Activated CD8-positive, alpha-beta T cell treated with anti-CD3 and anti-CD28 coated beads, Interleukin-2, amount 10 ng/mL, durations not matched to agents 7 days and 5 days (primary cell): ENCODE measurements at regions of chr19 and their contacts with region 1.

Region 1: GRCh38 chr19:46840136-46840942 is 10.3 kb downstream of the AP2S1 start:
- DNase-seq: peak; percentile 64
- ATAC-seq: peak; percentile 73
- H3K4me3 Mint-ChIP-seq: no peak overlapping the region
- H3K27ac Mint-ChIP-seq: no peak overlapping the region
- H3K4me1 Mint-ChIP-seq: no peaks in the 10 kb centered on the region
- H3K27me3 Mint-ChIP-seq: no peaks in the 10 kb centered on the region

Region 2: DNA sequence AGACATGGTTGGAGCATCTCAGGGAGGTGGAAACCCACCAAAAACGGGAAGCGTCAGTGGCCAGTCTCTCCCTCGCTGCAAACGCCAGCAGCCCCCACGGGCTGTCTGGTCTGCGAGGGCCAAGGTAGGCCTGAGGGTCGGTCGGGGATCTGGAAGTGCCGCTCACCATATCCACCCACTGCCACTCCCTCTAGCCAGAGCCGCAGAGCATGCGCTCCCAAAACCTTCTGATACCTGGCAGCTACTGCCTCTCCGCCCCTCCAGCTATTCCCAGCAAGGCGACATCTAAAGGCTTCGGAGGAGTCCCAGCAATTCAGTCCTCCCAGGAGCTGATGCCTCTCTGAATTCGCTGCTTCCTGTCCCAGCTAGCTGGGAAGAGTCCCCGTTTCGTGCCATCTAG is 98.9 kb before region 1 on chr19:
- CTCF ChIA-PET with region 1: interaction called, 12 read pairs
- POLR2A ChIA-PET with region 1: no interaction called
- DNase-seq: no peak
- ATAC-seq: no peak
- H3K4me3 Mint-ChIP-seq: no peak overlapping the region
- H3K27ac Mint-ChIP-seq: no peak overlapping the region
- H3K4me1 Mint-ChIP-seq: peaks cover 37% of the 10 kb centered on the region
- H3K27me3 Mint-ChIP-seq: no peaks in the 10 kb centered on the region

Region 3: GRCh38 chr19:46753420-46754155 is 86.8 kb before region 1 on chr19:
- CTCF ChIA-PET with region 1: interaction called, 122 read pairs
- POLR2A ChIA-PET with region 1: interaction called, 8 read pairs
- DNase-seq: peak; percentile 85
- ATAC-seq: peak; percentile 84
- H3K4me3 Mint-ChIP-seq: no peak overlapping the region
- H3K27ac Mint-ChIP-seq: no peak overlapping the region
- H3K4me1 Mint-ChIP-seq: peaks cover 25% of the 10 kb centered on the region
- H3K27me3 Mint-ChIP-seq: no peaks in the 10 kb centered on the region

Region 4: DNA sequence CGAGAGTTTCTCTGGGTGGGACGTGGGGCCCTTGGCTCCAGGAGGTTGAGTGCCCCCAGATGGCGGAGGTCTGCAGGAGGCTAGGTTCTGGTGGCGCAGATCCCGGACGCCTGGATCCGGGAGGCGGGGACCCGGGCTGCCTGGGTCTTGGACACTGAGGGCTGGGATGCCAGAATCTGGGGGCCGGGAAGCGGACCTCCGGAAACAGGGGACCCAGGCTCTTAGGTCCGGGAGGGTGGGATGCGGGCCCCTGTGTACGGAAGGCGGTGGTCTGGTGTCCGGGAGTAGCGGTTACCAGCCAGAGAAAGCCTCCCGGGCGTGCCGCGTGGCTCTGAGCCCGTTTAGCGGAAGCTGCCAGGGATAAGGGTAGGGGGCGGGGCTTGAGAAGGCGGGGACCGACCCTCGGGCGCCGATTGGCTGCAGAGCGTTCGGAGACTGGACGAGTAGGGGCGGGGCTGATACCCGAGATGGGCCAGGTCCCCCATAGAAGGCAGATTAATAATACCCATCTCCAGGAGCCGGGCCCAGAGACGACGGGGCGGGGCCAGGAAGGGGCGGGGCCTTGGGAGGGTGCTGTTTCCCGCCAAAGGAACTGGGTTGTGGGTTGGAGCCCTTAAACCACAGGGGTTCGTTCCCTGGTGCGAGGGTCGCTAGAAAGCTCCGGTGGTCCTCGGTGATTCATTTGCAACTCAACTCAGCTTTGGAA is 51.9 kb before region 1 on chr19 and contains the start of gene SLC1A5:
- CTCF ChIA-PET with region 1: interaction called, 40 read pairs
- POLR2A ChIA-PET with region 1: interaction called, 3 read pairs
- DNase-seq: peak; percentile 99
- ATAC-seq: peak; percentile 71
- H3K4me3 Mint-ChIP-seq: peak within 1 kb of the TSS; percentile 98
- H3K27ac Mint-ChIP-seq: peak within 1 kb of the TSS; percentile 96
- H3K4me1 Mint-ChIP-seq: peaks cover 63% of the 10 kb centered on the region
- H3K27me3 Mint-ChIP-seq: no peaks in the 10 kb centered on the region
- total RNA-seq, gene SLC1A5: 176 to 178 TPM

Region 5: DNA sequence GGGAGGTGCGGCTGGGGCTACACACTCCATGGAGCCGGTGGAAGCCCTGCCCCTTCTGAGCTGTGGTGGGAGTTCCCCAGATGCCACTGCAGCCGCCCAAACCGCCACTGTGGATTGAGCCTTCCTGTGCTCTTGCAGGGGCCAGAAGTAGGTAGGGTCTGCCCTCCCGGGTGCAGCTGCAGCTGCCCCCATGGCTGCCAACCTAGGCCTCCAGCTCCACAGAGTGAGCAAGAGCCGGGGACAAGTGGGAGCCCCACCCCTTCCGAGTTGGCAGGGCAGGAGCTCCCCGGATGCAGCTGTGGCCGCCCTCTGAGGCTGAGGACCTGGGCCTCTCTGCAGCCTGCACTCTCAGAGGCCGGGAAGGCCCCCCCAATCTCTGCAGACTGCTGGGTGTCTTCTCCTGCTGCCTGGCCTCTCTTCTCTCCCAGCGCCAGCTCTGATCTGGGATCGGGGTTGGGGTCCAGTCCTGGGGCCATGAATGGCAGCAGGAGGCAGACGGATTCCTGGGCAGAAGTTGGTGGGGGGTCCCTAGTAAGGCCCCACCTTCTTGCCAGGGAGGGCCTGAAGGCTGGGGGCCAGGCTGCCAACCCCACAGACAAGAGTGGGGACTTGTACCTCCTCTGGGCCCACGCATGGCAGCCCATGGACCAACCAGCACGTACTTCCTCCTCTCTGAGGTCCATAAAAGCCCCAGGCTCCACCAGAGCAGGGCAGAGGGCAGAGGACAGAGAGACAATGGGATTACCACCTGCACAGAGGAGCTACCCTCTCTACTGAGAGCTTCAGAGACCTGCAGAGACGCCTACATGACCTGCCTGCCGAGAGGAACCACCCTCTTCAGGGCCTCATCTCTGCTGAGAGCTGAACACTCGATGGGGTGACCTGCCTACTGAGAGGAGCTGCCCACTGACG is 18.6 kb before region 1 on chr19:
- CTCF ChIA-PET with region 1: interaction called, 19 read pairs
- POLR2A ChIA-PET with region 1: no interaction called
- DNase-seq: peak; percentile 83
- ATAC-seq: peak; percentile 91
- H3K4me3 Mint-ChIP-seq: peak overlapping the region; percentile 45
- H3K27ac Mint-ChIP-seq: peak overlapping the region; percentile 84
- H3K4me1 Mint-ChIP-seq: peaks cover 51% of the 10 kb centered on the region
- H3K27me3 Mint-ChIP-seq: no peaks in the 10 kb centered on the region

Region 6: DNA sequence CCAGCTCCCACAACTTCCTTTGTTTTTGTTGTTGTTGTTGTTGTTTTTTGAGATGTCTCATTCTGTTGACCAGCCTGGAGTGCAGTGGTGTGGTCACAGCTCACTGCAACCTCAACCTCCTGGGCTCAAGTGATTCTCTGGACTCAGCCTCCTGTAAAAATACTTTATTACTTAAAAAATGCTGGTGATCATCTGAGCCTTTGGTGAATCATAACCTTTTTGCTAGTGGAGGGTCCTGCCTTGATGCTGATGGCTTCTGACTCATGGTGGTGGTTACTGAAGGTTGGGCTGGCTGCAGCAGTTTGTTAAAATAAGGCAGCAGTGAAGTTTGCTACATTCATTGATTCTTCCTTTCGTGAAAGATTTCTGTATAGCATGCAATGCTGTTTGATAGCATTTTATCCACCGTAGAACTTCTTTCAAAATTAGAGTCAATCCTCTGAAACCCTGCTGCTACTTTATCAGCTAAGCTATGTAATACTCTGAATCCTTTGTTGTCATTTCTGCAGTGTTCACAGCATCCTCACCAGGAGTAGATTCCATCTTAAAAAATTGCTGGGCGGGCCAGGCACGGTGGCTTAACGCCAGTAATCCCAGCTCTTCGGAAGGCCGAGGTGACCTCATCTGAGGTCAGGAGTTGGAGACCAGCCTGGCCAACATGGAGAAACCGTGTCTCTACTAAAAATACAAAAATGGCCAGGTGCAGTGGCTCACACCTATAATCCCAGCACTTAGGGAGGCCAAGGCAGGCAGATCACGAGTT is 38.5 kb after region 1 on chr19:
- CTCF ChIA-PET with region 1: no interaction called
- POLR2A ChIA-PET with region 1: no interaction called
- DNase-seq: no peak
- ATAC-seq: no peak
- H3K4me3 Mint-ChIP-seq: no peak overlapping the region
- H3K27ac Mint-ChIP-seq: no peak overlapping the region
- H3K4me1 Mint-ChIP-seq: peaks cover 5% of the 10 kb centered on the region
- H3K27me3 Mint-ChIP-seq: no peaks in the 10 kb centered on the region